ENCODE measurements at regions of chr17 and their contacts with region 1.

Region 1: DNA sequence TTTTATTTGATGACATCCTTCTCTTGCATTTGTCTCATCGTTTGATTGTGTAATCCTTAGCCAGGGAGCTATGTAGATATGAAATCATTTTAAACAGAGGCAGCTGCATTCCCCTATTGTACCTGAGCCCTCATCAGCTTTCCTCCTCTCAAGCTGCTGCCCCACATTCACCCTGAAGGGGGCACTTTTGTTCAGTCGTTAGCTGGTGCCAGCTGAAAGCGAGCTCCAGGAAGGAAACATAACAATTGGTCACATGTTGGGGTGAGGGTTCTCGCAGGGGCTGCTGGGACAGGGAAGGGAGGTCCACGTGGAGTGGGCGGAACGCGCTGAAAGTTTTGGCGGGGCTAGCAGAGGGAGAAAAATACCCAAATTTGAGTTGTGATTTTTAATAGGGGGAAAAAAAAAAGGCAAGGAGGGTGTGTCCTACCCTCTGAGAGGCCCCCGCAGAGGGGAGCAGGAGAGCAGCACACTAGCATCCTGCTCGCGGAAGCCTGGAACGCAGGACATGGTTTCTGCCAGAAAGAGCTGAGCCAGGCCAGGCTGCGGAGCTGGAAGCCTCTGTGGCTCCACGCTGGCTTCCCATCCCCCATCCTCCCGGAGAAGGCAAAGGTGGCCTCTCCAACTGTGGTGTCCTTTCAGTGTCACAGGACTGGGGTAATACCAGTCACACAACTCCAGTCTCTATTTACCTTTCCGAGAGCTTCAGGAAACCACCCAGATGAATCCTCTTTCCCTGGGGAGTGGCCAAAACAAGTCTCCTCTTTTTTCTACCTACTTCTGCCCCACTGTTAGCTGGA is 8.5 kb upstream of the MSL1 start:
- DNase-seq: peak; percentile 78
- H3K4me3 ChIP-seq: peak overlapping the region; percentile 25
- H3K27me3 ChIP-seq: no peaks in the 10 kb centered on the region
- CTCF ChIP-seq: peak; percentile 82; the same call in 1 of the 2 replicates

Region 2: DNA sequence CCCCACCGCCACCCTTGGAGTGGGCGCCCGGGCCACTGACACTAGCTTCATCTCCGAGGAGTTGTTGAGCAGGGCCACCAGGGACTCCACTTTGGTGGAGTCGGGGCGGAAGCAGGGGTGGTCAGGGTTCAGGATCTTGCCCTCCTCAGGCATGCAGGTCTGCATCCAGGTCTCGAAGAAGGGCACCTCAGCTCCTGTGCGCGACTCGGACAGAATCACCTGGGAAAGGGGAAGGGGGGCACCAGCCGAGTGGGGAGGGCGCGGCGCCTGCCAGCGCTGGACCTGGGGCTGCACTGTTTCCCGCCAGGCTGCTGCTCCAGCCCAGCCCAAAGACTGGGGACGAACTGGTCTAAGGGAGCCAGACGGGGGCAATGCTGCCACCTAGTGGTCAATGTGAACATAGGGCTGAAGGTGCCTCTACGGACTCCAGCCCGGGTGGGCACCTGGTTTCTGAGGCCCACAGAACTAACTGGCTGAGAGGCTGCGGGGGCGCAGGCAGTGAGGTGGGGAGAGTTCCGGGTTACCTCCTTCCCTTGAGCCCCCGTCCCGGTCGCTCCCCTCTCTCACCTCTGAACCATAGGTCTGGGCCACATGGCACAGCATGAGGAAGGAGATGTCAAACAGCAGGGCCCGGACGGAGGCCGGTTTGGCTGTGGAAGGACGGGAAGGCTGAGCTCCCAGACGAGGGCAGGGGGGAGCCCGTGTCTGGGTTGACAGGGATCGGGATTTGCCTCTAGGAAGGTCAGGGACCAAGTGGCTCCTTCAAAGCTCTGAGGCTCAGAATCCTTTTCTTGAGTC is 86.3 kb before region 1 on chr17:
- CTCF ChIA-PET with region 1: interaction called, 44 read pairs
- POLR2A ChIA-PET with region 1: no interaction called
- DNase-seq: no peak
- H3K4me3 ChIP-seq: no peak overlapping the region
- H3K27me3 ChIP-seq: no peaks in the 10 kb centered on the region
- CTCF ChIP-seq: peak; percentile 89

Region 3: GRCh38 chr17:40062329-40063186 is 50.8 kb before region 1 on chr17 and contains the start of gene THRA:
- CTCF ChIA-PET with region 1: interaction called, 83 read pairs
- POLR2A ChIA-PET with region 1: interaction called, 7 read pairs
- DNase-seq: no peak
- H3K4me3 ChIP-seq: peak within 1 kb of the TSS; percentile 97
- H3K27me3 ChIP-seq: no peaks in the 10 kb centered on the region
- CTCF ChIP-seq: no peak
- polyA plus RNA-seq, gene THRA: 32.1 and 43.3 TPM in 2 replicates

Region 4: GRCh38 chr17:40075201-40075941 is 37.9 kb before region 1 on chr17:
- CTCF ChIA-PET with region 1: interaction called, 28 read pairs
- POLR2A ChIA-PET with region 1: no interaction called
- DNase-seq: no peak
- H3K4me3 ChIP-seq: no peak overlapping the region
- H3K27me3 ChIP-seq: no peaks in the 10 kb centered on the region
- CTCF ChIP-seq: peak; percentile 93

Region 5: DNA sequence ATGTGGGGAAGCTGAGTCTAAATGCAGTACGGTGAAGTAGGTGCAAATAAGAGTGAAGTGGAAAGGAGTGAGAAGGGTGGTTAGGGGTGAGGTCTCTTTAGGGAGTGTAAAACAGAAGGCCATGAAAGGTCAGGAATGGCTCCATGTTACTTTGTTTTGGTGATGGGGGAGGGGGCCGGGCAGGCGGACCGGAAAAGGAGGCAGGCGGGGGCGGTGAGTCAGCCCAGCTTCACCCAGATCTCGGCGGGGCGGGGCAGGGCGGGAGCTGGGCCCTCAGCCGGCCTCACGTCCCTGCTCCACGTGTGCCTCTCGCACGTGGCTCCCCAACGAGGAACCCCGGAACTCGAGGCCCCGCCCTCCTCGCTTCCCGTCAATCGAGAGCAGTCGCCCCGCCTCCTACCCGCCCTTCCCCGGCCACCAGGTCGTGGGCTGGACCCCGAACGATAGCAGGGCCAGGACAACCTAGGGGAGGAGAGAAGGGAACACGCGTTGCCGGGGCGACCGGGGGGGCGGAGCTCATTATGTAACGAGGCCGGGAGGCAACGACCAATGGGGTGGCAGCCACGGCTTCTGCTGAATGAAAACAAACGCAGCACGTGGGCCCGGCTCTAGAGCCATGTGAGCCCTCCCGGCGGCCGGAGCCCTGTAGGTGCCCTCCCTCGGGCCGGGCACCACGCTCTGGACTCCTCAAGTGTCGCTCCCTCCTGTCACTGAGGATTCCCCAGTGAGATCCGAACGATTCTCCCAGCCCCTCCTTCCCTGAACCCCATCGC is 14.3 kb before region 1 on chr17:
- CTCF ChIA-PET with region 1: interaction called, 84 read pairs
- POLR2A ChIA-PET with region 1: interaction called, 8 read pairs
- DNase-seq: peak; percentile 98
- H3K4me3 ChIP-seq: peak overlapping the region; percentile 89
- H3K27me3 ChIP-seq: no peaks in the 10 kb centered on the region
- CTCF ChIP-seq: no peak

Region 6: GRCh38 chr17:40168262-40168832 is 55.0 kb after region 1 on chr17:
- CTCF ChIA-PET with region 1: interaction called, 130 read pairs
- POLR2A ChIA-PET with region 1: no interaction called
- DNase-seq: no peak
- H3K4me3 ChIP-seq: no peak overlapping the region
- H3K27me3 ChIP-seq: no peaks in the 10 kb centered on the region
- CTCF ChIP-seq: peak; percentile 72

Region 7: GRCh38 chr17:40191237-40192208 is 78.2 kb after region 1 on chr17:
- CTCF ChIA-PET with region 1: interaction called, 63 read pairs
- POLR2A ChIA-PET with region 1: no interaction called
- DNase-seq: no peak
- H3K4me3 ChIP-seq: peak overlapping the region; percentile 47
- H3K27me3 ChIP-seq: no peaks in the 10 kb centered on the region
- CTCF ChIP-seq: peak; percentile 91

Region 8: GRCh38 chr17:40242774-40243173 is 129.5 kb after region 1 on chr17:
- CTCF ChIA-PET with region 1: no interaction called
- POLR2A ChIA-PET with region 1: no interaction called
- DNase-seq: peak; percentile 42
- H3K4me3 ChIP-seq: no peak overlapping the region
- H3K27me3 ChIP-seq: no peaks in the 10 kb centered on the region
- CTCF ChIP-seq: no peak